ENCODE measurements at regions of chr3 and their contacts with region 1.

Region 1: GRCh38 chr3:11803977-11804892 is 42.5 kb downstream of the TAMM41 start:
- DNase-seq: peak; percentile 53
- H3K4me3 ChIP-seq: no peak overlapping the region
- H3K27ac ChIP-seq: no peak overlapping the region
- H3K4me1 ChIP-seq: no peaks in the 10 kb centered on the region
- H3K27me3 ChIP-seq: no peaks in the 10 kb centered on the region
- CTCF ChIP-seq: peak; percentile 68 to 70
- POLR2A ChIP-seq: no peak

Region 2: GRCh38 chr3:11452885-11453847 is 351.1 kb before region 1 on chr3:
- CTCF ChIA-PET with region 1: no interaction called
- POLR2A ChIA-PET with region 1: no interaction called
- dilution Hi-C with region 1: no loop called
- intact Hi-C with region 1: no loop called
- DNase-seq: peak; percentile 85
- H3K4me3 ChIP-seq: no peak overlapping the region
- H3K27ac ChIP-seq: peak overlapping the region; percentile 48
- H3K4me1 ChIP-seq: peaks cover 15% of the 10 kb centered on the region
- H3K27me3 ChIP-seq: no peaks in the 10 kb centered on the region
- CTCF ChIP-seq: no peak
- POLR2A ChIP-seq: no peak

Region 3: DNA sequence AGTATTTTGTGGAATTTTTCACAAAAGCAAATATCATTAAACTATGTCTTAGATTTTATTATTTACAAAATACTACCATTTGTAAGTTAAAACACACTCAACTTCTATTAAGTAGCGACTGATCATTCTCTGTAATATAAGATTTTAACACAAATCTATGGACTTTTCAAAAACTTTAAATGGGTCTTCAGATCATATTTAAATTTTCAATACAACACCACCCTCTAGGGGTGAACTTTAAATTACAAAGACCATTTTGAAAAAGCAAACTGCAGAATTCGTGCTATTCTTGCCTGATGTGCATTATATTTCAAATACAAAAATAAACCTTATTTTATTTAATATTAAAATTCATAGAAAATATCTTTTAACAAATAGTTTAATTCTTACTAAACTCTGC is 152.3 kb before region 1 on chr3:
- CTCF ChIA-PET with region 1: interaction called, 21 read pairs
- POLR2A ChIA-PET with region 1: no interaction called
- dilution Hi-C with region 1: no loop called
- intact Hi-C with region 1: loop called (anchors 1 kb)
- DNase-seq: peak; percentile 62
- H3K4me3 ChIP-seq: no peak overlapping the region
- H3K27ac ChIP-seq: no peak overlapping the region
- H3K4me1 ChIP-seq: peaks cover 3% of the 10 kb centered on the region
- H3K27me3 ChIP-seq: no peaks in the 10 kb centered on the region
- CTCF ChIP-seq: peak in 1 of 2 donors; percentile 16
- POLR2A ChIP-seq: no peak

Region 4: GRCh38 chr3:11662402-11662990 is 141.7 kb before region 1 on chr3:
- CTCF ChIA-PET with region 1: interaction called, 21 read pairs
- POLR2A ChIA-PET with region 1: no interaction called
- dilution Hi-C with region 1: no loop called
- intact Hi-C with region 1: loop called (anchors 1 kb)
- DNase-seq: peak; percentile 31
- H3K4me3 ChIP-seq: no peak overlapping the region
- H3K27ac ChIP-seq: no peak overlapping the region
- H3K4me1 ChIP-seq: peaks cover 12% of the 10 kb centered on the region
- H3K27me3 ChIP-seq: no peaks in the 10 kb centered on the region
- CTCF ChIP-seq: peak; percentile 33 to 43
- POLR2A ChIP-seq: no peak

Region 5: DNA sequence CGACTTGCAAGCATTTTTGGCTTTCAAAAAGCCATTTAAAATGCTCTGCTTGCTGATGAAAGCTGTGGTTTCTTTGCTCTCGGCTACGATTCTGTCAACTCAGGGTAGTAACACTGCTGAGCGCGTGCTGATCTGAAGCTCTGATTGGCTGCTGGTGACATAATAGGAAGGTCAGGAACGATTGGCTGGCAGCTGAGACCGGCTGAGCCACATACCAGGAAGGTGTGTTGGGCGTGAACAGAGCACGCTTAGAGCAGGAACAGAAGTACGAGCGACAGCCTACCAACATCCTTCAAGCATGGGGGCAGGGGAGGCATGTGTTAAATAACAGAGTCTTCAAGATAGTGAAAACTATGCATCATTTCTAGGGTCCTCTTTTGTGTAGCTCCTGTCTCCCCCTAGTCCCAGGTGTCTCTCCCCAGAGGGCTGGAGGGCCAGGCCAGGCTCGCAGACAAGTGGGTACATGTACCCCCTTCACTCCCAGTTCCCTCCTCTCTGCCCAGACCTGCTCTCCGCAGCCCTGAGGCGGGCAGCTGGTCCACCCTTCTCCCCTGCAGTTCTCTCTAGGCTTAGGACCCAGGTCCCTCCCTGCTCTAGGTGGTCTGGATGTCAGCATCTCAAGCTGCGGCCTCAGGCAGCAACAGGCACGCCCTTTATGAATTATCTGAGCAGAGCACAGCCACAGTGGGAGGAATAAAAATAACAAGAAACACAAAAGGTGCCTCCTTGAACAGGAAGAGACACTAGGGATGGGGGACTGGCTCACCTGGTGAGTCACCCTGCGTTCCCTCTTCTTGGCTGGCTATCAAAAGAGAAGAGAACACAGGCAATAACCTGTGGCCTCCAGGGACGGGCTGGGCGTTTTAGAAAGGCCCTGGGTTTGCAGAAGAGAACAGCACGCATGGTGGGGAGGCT is 33.5 kb before region 1 on chr3:
- CTCF ChIA-PET with region 1: interaction called, 3 read pairs
- POLR2A ChIA-PET with region 1: no interaction called
- dilution Hi-C with region 1: no loop called
- intact Hi-C with region 1: loop called (anchors 1 kb)
- DNase-seq: peak; percentile 85
- H3K4me3 ChIP-seq: no peak overlapping the region
- H3K27ac ChIP-seq: no peak overlapping the region
- H3K4me1 ChIP-seq: peaks cover 11% of the 10 kb centered on the region
- H3K27me3 ChIP-seq: no peaks in the 10 kb centered on the region
- CTCF ChIP-seq: no peak
- POLR2A ChIP-seq: no peak

Region 6: DNA sequence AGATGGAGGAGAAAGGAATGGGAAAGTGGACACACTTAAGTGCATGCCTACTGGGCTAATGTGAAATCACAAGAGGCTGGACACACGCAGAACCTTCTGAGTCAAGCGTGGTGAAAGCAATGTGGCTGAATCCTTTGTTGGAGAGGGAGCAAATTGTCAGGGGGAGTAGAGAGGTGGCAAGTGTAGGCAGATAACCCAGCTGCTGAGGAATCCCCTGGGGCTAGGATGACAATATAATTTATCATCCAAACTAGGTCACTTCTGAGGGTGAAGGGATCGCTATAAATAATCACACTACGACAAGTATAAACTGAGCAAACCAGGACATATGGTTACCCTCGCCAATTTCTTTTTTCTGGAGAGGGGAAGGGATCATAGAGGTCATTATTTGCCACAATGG is 13.8 kb after region 1 on chr3:
- CTCF ChIA-PET with region 1: interaction called, 12 read pairs
- POLR2A ChIA-PET with region 1: interaction called, 4 read pairs
- dilution Hi-C with region 1: no loop called
- intact Hi-C with region 1: no loop called
- DNase-seq: no peak
- H3K4me3 ChIP-seq: no peak overlapping the region
- H3K27ac ChIP-seq: no peak overlapping the region
- H3K4me1 ChIP-seq: peaks cover 8% of the 10 kb centered on the region
- H3K27me3 ChIP-seq: no peaks in the 10 kb centered on the region
- CTCF ChIP-seq: no peak
- POLR2A ChIP-seq: no peak

Measured in endothelial cell of umbilical vein (primary cell).